ENCODE measurements at regions of chr3 and their contacts with region 1.

Region 1: DNA sequence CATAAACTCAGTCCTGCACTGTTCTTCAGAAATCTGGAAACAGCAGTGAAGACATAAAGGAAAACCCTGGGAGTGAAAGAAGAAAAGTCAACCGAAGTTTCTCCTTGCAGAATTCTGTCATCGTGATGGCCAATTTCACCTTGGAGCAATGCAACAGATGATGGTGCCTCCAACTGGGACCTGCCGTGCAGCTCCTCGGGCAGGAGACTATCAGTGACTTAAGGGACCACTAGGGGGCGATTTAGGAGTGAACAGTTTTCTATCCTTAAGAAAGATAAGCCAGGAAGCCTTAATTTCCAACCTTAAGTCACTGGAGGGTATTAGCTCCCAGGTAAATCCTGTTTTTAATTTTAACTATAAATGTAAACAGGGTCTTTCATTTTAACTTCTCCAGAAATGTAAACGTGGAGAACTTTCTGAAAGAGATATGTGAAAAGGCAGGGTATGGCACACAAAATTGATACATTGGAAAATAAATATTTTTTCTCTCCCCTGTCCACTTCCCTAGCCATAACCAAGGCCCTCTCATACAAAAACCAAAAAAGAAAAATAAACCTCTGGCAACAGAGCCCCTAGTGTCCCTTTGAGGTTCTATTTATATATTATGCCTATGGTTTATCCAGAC is 116.3 kb downstream of the PDZRN3 start:
- DNase-seq: no peak
- ATAC-seq: peak; percentile 71 to 85 (median 80)
- H3K4me3 ChIP-seq: no peak overlapping the region
- H3K27ac ChIP-seq: peak overlapping the region; percentile 70
- H3K4me1 ChIP-seq: peaks cover 58% of the 10 kb centered on the region
- H3K27me3 ChIP-seq: no peaks in the 10 kb centered on the region
- CTCF ChIP-seq: peak; percentile 81

Region 2: GRCh38 chr3:73563896-73564582 is 55.6 kb after region 1 on chr3:
- intact Hi-C with region 1: loop called in 1 of 2 experiments (anchors 5 kb)
- DNase-seq: no peak
- ATAC-seq: no peak
- H3K4me3 ChIP-seq: no peak overlapping the region
- H3K27ac ChIP-seq: no peak overlapping the region
- H3K4me1 ChIP-seq: peaks cover 38% of the 10 kb centered on the region
- H3K27me3 ChIP-seq: no peaks in the 10 kb centered on the region
- CTCF ChIP-seq: no peak

Region 3: DNA sequence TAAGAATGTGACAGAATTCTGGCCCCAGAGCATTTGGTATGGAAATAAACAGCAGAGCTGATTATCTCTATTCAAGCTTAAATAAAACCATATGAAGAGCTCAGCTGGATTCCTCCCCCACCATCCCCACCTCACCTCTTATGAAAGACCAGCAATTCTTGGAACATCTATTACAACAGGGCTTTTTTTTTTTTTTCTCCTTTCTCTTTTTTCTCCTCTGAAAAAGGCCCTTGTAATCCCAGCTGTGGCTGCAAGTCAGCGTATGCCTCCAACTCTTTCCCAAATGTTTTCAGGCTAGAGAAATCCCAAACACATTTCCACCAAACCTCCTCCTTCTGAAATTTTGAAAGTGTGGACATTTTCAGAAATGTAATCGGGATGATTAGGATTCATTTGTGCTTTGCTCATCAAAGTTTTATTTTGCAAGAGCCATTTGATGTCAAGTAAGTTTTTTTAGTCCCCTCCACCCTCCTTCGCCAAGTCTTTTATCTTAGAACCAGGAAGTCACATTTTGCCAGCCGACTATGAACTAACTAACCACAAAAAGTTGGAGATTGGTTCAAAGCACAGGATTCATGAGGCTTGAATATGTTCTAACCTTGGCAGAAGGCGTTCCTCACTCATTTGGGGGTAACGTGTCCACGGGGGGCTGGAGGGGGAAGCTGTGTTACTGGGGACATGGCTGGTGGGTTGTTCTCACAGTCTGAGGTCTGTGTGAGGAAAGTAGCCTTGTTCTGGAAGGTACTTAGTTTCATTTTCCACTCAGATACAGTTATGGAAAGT is 258.3 kb after region 1 on chr3:
- intact Hi-C with region 1: loop called in 1 of 2 experiments (anchors 10 kb)
- DNase-seq: peak in 1 of 2 donors; percentile 52
- ATAC-seq: peak; percentile 26 to 69 (median 50)
- H3K4me3 ChIP-seq: peak overlapping the region; percentile 33
- H3K27ac ChIP-seq: peak overlapping the region; percentile 50
- H3K4me1 ChIP-seq: peaks cover 8% of the 10 kb centered on the region
- H3K27me3 ChIP-seq: no peaks in the 10 kb centered on the region
- CTCF ChIP-seq: no peak

Measured in psoas muscle (tissue), 8 donors.